ENCODE measurements at regions of chr13 and their contacts with region 1.

Region 1: DNA sequence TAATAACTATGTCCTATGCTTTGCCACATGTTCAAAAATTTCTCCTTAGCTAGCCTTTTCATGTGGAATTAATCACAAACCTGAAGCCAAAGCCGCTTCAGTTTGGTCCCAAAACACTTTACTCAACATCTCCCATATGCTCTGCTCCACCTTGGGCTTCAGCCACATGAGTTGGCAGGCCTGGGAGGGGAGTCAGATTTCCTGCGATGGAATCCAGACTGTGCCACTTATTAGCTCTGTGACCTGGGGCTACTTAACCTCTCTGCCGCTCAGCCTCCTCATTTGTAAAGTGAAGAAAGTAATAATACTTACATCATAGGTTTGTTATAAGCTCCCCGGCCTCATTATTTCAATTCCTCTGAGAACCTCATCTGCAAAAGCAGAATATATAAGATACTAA is 272.0 kb downstream of the LMO7 start:
- DNase-seq: peak; percentile 12 to 50
- ATAC-seq: peak in 7 of 8 donors; percentile 65 to 86 (median 82)
- H3K4me3 ChIP-seq: no peak overlapping the region
- H3K27ac ChIP-seq: peak overlapping the region in 1 of 10 donors; percentile 30
- H3K4me1 ChIP-seq: peaks cover 0 to 14% (median 5%) of the 10 kb centered on the region in 9 donors
- H3K27me3 ChIP-seq: no peaks in the 10 kb centered on the region
- CTCF ChIP-seq: no peak

Region 2: GRCh38 chr13:75847588-75847987 is 60.6 kb before region 1 on chr13:
- intact Hi-C with region 1: no loop called
- DNase-seq: no peak
- ATAC-seq: peak in 1 of 8 donors; percentile 55
- H3K4me3 ChIP-seq: no peak overlapping the region
- H3K27ac ChIP-seq: no peak overlapping the region
- H3K4me1 ChIP-seq: peaks cover 0 to 9% (median 0%) of the 10 kb centered on the region in 9 donors
- H3K27me3 ChIP-seq: no peaks in the 10 kb centered on the region
- CTCF ChIP-seq: no peak

Region 3: DNA sequence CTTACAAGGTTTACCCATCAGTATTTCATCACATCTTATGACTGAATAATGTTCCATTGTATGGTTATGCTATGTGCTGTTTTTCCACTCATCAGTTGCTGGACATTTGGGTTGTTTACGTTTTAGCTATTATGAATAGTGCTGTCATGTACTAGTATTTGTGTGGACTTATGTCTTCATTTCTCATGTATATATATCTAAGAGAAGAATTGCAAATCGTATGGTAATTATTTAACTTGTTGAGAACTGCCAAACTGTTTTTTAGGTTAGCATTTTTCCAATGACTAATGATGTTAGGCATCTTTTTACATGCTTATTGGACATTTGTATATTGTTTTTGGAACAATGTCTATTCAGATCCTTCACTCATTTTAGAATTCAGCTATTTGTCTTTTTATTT is 96.3 kb after region 1 on chr13:
- intact Hi-C with region 1: loop called in 2 of 10 experiments (anchors 5 to 10 kb)
- DNase-seq: no peak
- ATAC-seq: no peak
- H3K4me3 ChIP-seq: no peak overlapping the region
- H3K27ac ChIP-seq: no peak overlapping the region
- H3K4me1 ChIP-seq: peaks cover 0 to 22% (median 5%) of the 10 kb centered on the region in 9 donors
- H3K27me3 ChIP-seq: no peaks in the 10 kb centered on the region
- CTCF ChIP-seq: no peak

Region 4: GRCh38 chr13:76009491-76009890 is 101.3 kb after region 1 on chr13:
- intact Hi-C with region 1: loop called in 3 of 10 experiments (anchors 5 to 10 kb)
- DNase-seq: no peak
- ATAC-seq: no peak
- H3K4me3 ChIP-seq: no peak overlapping the region
- H3K27ac ChIP-seq: no peak overlapping the region
- H3K4me1 ChIP-seq: peaks cover 0 to 29% (median 12%) of the 10 kb centered on the region in 9 donors
- H3K27me3 ChIP-seq: no peaks in the 10 kb centered on the region
- CTCF ChIP-seq: no peak

Region 5: DNA sequence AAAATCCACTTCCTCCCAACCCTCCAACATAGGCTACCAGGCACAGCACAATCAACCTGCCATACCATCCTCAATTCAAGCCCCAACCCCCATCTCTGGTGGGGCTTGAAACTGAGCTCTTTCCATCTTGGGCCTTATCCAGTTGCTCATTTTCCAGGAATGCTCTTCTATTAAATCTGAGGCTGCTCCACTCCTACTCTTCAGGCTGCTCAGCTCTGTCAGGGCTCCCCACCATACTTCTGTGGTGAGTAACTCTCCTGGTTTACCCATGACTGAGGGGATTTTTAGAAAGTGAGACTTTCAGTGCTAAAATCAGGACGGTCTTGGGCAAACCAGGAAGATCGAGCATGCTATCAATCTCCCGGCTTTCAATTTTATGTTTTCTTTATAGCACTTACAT is 240.8 kb after region 1 on chr13:
- intact Hi-C with region 1: no loop called
- DNase-seq: no peak
- ATAC-seq: no peak
- H3K4me3 ChIP-seq: no peak overlapping the region
- H3K27ac ChIP-seq: no peak overlapping the region
- H3K4me1 ChIP-seq: no peaks in the 10 kb centered on the region
- H3K27me3 ChIP-seq: no peaks in the 10 kb centered on the region
- CTCF ChIP-seq: no peak

Region 6: GRCh38 chr13:76245920-76246319 is 337.8 kb after region 1 on chr13:
- intact Hi-C with region 1: no loop called
- DNase-seq: no peak
- ATAC-seq: no peak
- H3K4me3 ChIP-seq: no peak overlapping the region
- H3K27ac ChIP-seq: no peak overlapping the region
- H3K4me1 ChIP-seq: peaks cover 0 to 4% (median 0%) of the 10 kb centered on the region in 9 donors
- H3K27me3 ChIP-seq: no peaks in the 10 kb centered on the region
- CTCF ChIP-seq: no peak

Measured in heart right ventricle (tissue), 16 donors.